ENCODE measurements at regions of chr7 and their contacts with region 1.

Region 1: GRCh38 chr7:39465055-39465929 is 100.9 kb upstream of the YAE1 start:
- DNase-seq: peak; percentile 26 to 41 (median 33)
- H3K4me3 ChIP-seq: no peak overlapping the region
- H3K27ac ChIP-seq: no peak overlapping the region
- H3K4me1 ChIP-seq: no peaks in the 10 kb centered on the region
- H3K27me3 ChIP-seq: no peaks in the 10 kb centered on the region
- CTCF ChIP-seq: peak; percentile 8 to 53 (median 31)
- EP300 ChIP-seq: no peak
- POLR2A ChIP-seq: no peak

Region 2: GRCh38 chr7:38932509-38933168 is 532.7 kb before region 1 on chr7:
- intact Hi-C with region 1: loop called in 1 of 4 experiments (anchors 10 kb)
- DNase-seq: peak; percentile 55 to 75 (median 59)
- H3K4me3 ChIP-seq: no peak overlapping the region
- H3K27ac ChIP-seq: no peak overlapping the region
- H3K4me1 ChIP-seq: no peaks in the 10 kb centered on the region
- H3K27me3 ChIP-seq: no peaks in the 10 kb centered on the region
- CTCF ChIP-seq: peak; percentile 27 to 62 (median 39)
- EP300 ChIP-seq: no peak
- POLR2A ChIP-seq: no peak

Region 3: GRCh38 chr7:39480901-39481300 is 15.6 kb after region 1 on chr7:
- intact Hi-C with region 1: no loop called
- DNase-seq: no peak
- H3K4me3 ChIP-seq: no peak overlapping the region
- H3K27ac ChIP-seq: no peak overlapping the region
- H3K4me1 ChIP-seq: no peaks in the 10 kb centered on the region
- H3K27me3 ChIP-seq: no peaks in the 10 kb centered on the region
- CTCF ChIP-seq: no peak
- EP300 ChIP-seq: no peak
- POLR2A ChIP-seq: no peak

Region 4: DNA sequence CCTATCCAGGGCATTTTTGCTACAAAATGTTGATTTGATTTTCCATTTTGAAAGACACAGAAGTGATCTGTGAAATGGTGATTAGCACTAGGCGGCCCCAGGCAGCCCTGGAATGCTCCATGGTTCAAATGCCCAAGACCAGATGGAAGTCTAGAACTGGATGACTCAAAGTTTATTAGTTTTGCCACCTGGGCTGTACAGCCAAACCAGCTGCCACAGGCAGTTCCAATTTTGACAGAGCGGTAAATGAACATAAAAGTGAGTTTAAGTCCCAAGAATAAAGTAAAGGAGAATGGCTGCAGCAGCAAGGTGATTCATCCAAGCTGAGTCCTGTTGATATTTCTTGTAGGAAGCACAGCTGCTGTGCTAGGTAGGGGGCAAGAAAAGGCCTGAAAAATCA is 850.0 kb after region 1 on chr7:
- intact Hi-C with region 1: no loop called
- DNase-seq: no peak
- H3K4me3 ChIP-seq: no peak overlapping the region
- H3K27ac ChIP-seq: no peak overlapping the region
- H3K4me1 ChIP-seq: no peaks in the 10 kb centered on the region
- H3K27me3 ChIP-seq: no peaks in the 10 kb centered on the region
- CTCF ChIP-seq: no peak
- EP300 ChIP-seq: no peak
- POLR2A ChIP-seq: no peak

Measured in ovary (tissue), 10 donors.